Naive thymus-derived CD4-positive, alpha-beta T cell (primary cell): ENCODE measurements at regions of chr2 and their contacts with region 1.

Region 1: GRCh38 chr2:237966565-237967462 is at the start of gene UBE2F:
- DNase-seq: peak; percentile 93 to 98 (median 97)
- ATAC-seq: peak; percentile 97
- H3K4me3 ChIP-seq: peak within 1 kb of the TSS; percentile 96
- H3K4me3 Mint-ChIP-seq: peak within 1 kb of the TSS; percentile 84 to 93 (median 90)
- H3K27ac ChIP-seq: peak within 1 kb of the TSS; percentile 64
- H3K27ac Mint-ChIP-seq: peak within 1 kb of the TSS; percentile 82 to 95 (median 88)
- H3K4me1 ChIP-seq: peaks cover 13 to 35% of the 10 kb centered on the region in 2 donors
- H3K4me1 Mint-ChIP-seq: peaks cover 29 to 47% (median 44%) of the 10 kb centered on the region in 7 donors
- H3K27me3 ChIP-seq: no peaks in the 10 kb centered on the region
- H3K27me3 Mint-ChIP-seq: peaks cover 0 to 3% (median 0%) of the 10 kb centered on the region in 5 donors
- total RNA-seq, gene UBE2F: 42.5 to 80.9 (median 48.3) TPM

Region 2: DNA sequence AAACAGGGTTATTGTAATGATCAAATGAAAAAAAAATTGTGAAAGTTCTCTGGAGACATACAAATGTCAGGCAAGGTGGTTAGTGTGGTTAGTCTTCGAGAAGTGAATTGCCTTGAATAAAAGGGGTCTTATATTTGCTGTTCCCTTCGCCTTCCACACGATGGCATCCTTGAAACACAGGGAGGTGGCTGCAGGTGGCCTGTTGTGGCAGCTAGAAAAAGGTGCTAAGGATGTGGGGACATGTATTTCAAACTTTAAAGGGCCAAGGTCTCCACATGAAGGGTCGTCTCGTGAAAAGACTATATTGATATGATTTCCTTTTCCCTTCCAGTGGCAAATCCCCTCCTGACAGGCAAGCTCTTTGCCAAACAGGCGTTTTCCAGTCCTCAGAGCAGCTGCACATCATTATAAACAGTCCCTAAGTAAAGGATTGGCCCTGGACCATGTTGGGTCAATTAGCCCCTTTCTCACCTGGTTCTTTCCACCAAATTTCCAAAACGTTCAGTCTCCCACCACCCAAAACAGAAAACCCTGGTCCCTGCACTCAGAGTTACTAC is 812.7 kb before region 1 on chr2:
- CTCF ChIA-PET with region 1: no interaction called
- POLR2A ChIA-PET with region 1: no interaction called
- intact Hi-C with region 1: no loop called
- DNase-seq: peak; percentile 21 to 74 (median 60)
- ATAC-seq: peak; percentile 72
- H3K4me3 ChIP-seq: no peak overlapping the region
- H3K4me3 Mint-ChIP-seq: no peak overlapping the region
- H3K27ac ChIP-seq: no peak overlapping the region
- H3K27ac Mint-ChIP-seq: no peak overlapping the region
- H3K4me1 ChIP-seq: no peaks in the 10 kb centered on the region
- H3K4me1 Mint-ChIP-seq: peaks cover 0 to 23% (median 8%) of the 10 kb centered on the region in 7 donors
- H3K27me3 ChIP-seq: no peaks in the 10 kb centered on the region
- H3K27me3 Mint-ChIP-seq: no peaks in the 10 kb centered on the region

Region 3: GRCh38 chr2:237691908-237692600 is 274.8 kb before region 1 on chr2:
- CTCF ChIA-PET with region 1: no interaction called
- POLR2A ChIA-PET with region 1: no interaction called
- intact Hi-C with region 1: loop called (anchors 5 to 10 kb)
- DNase-seq: peak; percentile 84 to 97 (median 90)
- ATAC-seq: peak; percentile 75
- H3K4me3 ChIP-seq: peak overlapping the region; percentile 82
- H3K4me3 Mint-ChIP-seq: peak overlapping the region; percentile 86 to 98 (median 92)
- H3K27ac ChIP-seq: peak overlapping the region; percentile 97
- H3K27ac Mint-ChIP-seq: peak overlapping the region; percentile 89 to 98 (median 94)
- H3K4me1 ChIP-seq: peaks cover 61 to 63% of the 10 kb centered on the region in 2 donors
- H3K4me1 Mint-ChIP-seq: peaks cover 59 to 86% (median 74%) of the 10 kb centered on the region in 7 donors
- H3K27me3 ChIP-seq: no peaks in the 10 kb centered on the region
- H3K27me3 Mint-ChIP-seq: no peaks in the 10 kb centered on the region

Region 4: DNA sequence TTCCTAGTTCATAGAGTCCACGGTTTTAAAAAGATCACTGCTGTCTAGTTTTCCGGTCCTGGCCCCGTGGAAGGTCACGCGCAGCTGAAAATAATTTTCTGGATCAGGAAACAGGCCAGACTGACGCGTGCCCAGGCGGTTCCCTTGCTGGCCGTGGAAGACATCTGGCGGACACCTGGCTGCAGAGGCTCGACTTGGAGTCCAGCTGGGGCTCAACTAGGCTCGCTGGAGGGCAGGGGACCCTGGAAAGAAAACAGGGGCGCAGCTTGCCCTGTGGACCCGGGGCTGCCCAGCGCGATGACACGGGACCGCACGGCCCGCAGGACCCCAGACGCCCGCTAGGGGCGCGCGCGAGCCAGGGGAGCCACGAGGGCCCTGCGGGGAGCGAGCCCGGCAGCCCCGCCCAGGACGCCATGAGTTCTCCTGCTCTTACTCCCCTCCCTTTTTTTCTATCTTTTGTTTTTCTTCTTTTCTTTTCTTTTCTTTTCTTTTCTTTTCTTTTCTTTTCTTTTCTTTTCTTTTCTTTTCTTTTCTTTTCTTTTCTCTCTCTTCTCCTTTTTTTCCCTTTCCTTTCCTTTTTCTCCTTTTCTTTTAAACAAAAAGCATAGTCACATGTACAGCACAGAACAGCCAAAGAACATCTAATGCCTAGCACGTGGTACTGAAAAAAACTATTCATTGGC is 43.2 kb before region 1 on chr2:
- CTCF ChIA-PET with region 1: interaction called, 7 read pairs
- POLR2A ChIA-PET with region 1: interaction called, 7 read pairs
- intact Hi-C with region 1: loop called (anchors 1 kb)
- DNase-seq: peak; percentile 57 to 90 (median 79)
- ATAC-seq: peak; percentile 99
- H3K4me3 ChIP-seq: peak overlapping the region; percentile 55
- H3K4me3 Mint-ChIP-seq: peak overlapping the region; percentile 37 to 81 (median 68)
- H3K27ac ChIP-seq: peak overlapping the region; percentile 20
- H3K27ac Mint-ChIP-seq: peak overlapping the region in 8 of 9 donors; percentile 16 to 86 (median 56)
- H3K4me1 ChIP-seq: no peaks in the 10 kb centered on the region
- H3K4me1 Mint-ChIP-seq: peaks cover 11 to 42% (median 31%) of the 10 kb centered on the region in 7 donors
- H3K27me3 ChIP-seq: no peaks in the 10 kb centered on the region
- H3K27me3 Mint-ChIP-seq: peaks cover 0 to 2% (median 0%) of the 10 kb centered on the region in 5 donors

Region 5: DNA sequence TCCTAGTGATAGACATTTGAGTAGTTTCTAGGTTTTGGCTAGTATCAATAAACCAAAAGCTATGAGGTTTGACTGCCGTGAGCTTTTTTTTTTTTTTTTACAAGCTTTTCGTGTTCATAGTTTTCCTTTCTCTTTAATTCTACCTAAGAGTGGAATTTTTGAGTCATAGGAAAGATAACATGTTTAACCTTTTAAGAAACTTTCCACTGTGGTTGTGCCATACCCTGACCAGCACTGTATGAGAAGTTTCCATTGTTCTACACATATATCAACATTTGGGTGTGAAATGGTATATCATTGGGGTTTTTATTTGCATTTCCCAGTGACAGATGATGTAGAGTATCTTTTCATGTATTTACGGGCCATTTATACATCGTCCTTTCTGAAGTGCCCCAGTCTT is 31.7 kb after region 1 on chr2:
- CTCF ChIA-PET with region 1: interaction called, 3 read pairs
- POLR2A ChIA-PET with region 1: interaction called, 4 read pairs
- intact Hi-C with region 1: loop called (anchors 1 to 2 kb)
- DNase-seq: peak in 3 of 9 donors; percentile 26 to 55 (median 35)
- ATAC-seq: peak; percentile 58
- H3K4me3 ChIP-seq: peak overlapping the region; percentile 36
- H3K4me3 Mint-ChIP-seq: peak overlapping the region; percentile 27 to 80 (median 58)
- H3K27ac ChIP-seq: peak overlapping the region; percentile 64
- H3K27ac Mint-ChIP-seq: peak overlapping the region; percentile 46 to 95 (median 81)
- H3K4me1 ChIP-seq: peaks cover 12 to 14% of the 10 kb centered on the region in 2 donors
- H3K4me1 Mint-ChIP-seq: peaks cover 11 to 52% (median 40%) of the 10 kb centered on the region in 7 donors
- H3K27me3 ChIP-seq: no peaks in the 10 kb centered on the region
- H3K27me3 Mint-ChIP-seq: no peaks in the 10 kb centered on the region

Region 6: GRCh38 chr2:238169708-238170251 is 203.0 kb after region 1 on chr2:
- CTCF ChIA-PET with region 1: no interaction called
- POLR2A ChIA-PET with region 1: no interaction called
- intact Hi-C with region 1: loop called in 1 of 2 experiments (anchors 10 kb)
- DNase-seq: no peak
- ATAC-seq: no peak
- H3K4me3 ChIP-seq: no peak overlapping the region
- H3K4me3 Mint-ChIP-seq: no peak overlapping the region
- H3K27ac ChIP-seq: no peak overlapping the region
- H3K27ac Mint-ChIP-seq: no peak overlapping the region
- H3K4me1 ChIP-seq: no peaks in the 10 kb centered on the region
- H3K4me1 Mint-ChIP-seq: peaks cover 0 to 7% (median 0%) of the 10 kb centered on the region in 7 donors
- H3K27me3 ChIP-seq: no peaks in the 10 kb centered on the region
- H3K27me3 Mint-ChIP-seq: peaks cover 4 to 7% (median 7%) of the 10 kb centered on the region in 5 donors

Region 7: GRCh38 chr2:238263204-238264071 is 296.6 kb after region 1 on chr2:
- CTCF ChIA-PET with region 1: interaction called, 4 read pairs
- POLR2A ChIA-PET with region 1: no interaction called
- intact Hi-C with region 1: loop called (anchors 1 kb)
- DNase-seq: peak; percentile 55 to 71 (median 67)
- ATAC-seq: peak; percentile 75
- H3K4me3 ChIP-seq: no peak overlapping the region
- H3K4me3 Mint-ChIP-seq: no peak overlapping the region
- H3K27ac ChIP-seq: no peak overlapping the region
- H3K27ac Mint-ChIP-seq: peak overlapping the region in 3 of 9 donors; percentile 57 to 80 (median 68)
- H3K4me1 ChIP-seq: no peaks in the 10 kb centered on the region
- H3K4me1 Mint-ChIP-seq: peaks cover 4 to 23% (median 6%) of the 10 kb centered on the region in 7 donors
- H3K27me3 ChIP-seq: no peaks in the 10 kb centered on the region
- H3K27me3 Mint-ChIP-seq: no peaks in the 10 kb centered on the region

Region 8: GRCh38 chr2:239114119-239114581 is 1147.3 kb after region 1 on chr2:
- CTCF ChIA-PET with region 1: no interaction called
- POLR2A ChIA-PET with region 1: no interaction called
- intact Hi-C with region 1: no loop called
- DNase-seq: no peak
- ATAC-seq: no peak
- H3K4me3 ChIP-seq: no peak overlapping the region
- H3K4me3 Mint-ChIP-seq: no peak overlapping the region
- H3K27ac ChIP-seq: no peak overlapping the region
- H3K27ac Mint-ChIP-seq: no peak overlapping the region
- H3K4me1 ChIP-seq: no peaks in the 10 kb centered on the region
- H3K4me1 Mint-ChIP-seq: peaks cover 2 to 17% (median 8%) of the 10 kb centered on the region in 7 donors
- H3K27me3 ChIP-seq: no peaks in the 10 kb centered on the region
- H3K27me3 Mint-ChIP-seq: no peaks in the 10 kb centered on the region